IMR-90 (cell line): ENCODE measurements at regions of chr5 and their contacts with region 1.

Region 1: GRCh38 chr5:57779383-57780223 is 297.0 kb upstream of the ACTBL2 start:
- DNase-seq: peak; percentile 83
- ATAC-seq: peak; percentile 77
- H3K4me3 ChIP-seq: no peak overlapping the region
- H3K27ac ChIP-seq: peak overlapping the region; percentile 58; the same call in 1 of the 2 replicates
- H3K4me1 ChIP-seq: peaks cover 20% of the 10 kb centered on the region
- H3K27me3 ChIP-seq: no peaks in the 10 kb centered on the region
- CTCF ChIP-seq: peak; percentile 81
- POLR2A ChIP-seq: no peak; the same call in 1 of the 2 replicates
- RAD21 ChIP-seq: peak; percentile 92

Region 2: GRCh38 chr5:57383093-57383861 is 396.3 kb before region 1 on chr5:
- CTCF ChIA-PET with region 1: interaction called, 3 read pairs
- POLR2A ChIA-PET with region 1: no interaction called
- dilution Hi-C with region 1: no loop called
- in situ Hi-C with region 1: no loop called
- intact Hi-C with region 1: loop called (anchors 5 kb)
- DNase-seq: peak; percentile 99
- ATAC-seq: peak; percentile 93
- H3K4me3 ChIP-seq: no peak overlapping the region
- H3K27ac ChIP-seq: peak overlapping the region; percentile 94
- H3K4me1 ChIP-seq: peaks cover 8% of the 10 kb centered on the region
- H3K27me3 ChIP-seq: no peaks in the 10 kb centered on the region
- CTCF ChIP-seq: peak; percentile 59
- POLR2A ChIP-seq: no peak
- RAD21 ChIP-seq: peak; percentile 66

Region 3: DNA sequence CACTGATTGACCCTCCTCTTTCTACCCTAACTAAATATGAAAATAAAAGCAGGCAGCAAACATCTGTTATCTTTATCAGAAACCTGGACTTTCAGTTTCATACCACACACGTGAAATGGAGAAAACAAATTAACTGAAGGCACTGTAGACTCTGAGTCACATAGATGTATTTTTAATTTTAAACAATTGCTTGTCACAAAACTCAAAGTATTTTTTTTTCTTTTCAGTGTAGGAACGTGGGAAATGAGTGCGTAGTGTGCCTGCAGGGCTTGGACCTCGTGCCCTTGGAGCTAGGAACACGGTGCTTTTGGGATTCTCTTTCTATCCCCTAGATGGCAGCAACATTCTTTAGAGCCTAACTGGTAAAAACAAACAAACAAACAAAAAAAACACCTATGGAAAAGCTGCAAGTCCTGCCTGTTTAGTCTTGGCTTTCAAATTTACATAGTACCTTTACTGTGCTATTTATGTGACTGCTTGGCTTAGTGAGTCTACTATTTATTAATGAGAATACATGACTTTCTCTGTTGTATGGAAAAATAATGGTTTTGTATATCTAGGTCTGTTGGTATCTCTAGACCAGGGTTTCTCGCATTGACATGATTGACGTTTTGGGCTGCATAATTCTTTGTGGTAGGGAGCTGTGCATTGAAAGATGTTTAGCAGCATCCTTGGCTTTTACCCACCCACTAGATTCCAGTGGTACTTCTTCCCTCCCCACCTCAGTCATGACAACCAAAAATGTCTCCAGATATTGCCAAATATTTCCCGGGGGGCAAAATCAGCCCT is 280.1 kb before region 1 on chr5:
- CTCF ChIA-PET with region 1: interaction called, 34 read pairs
- POLR2A ChIA-PET with region 1: no interaction called
- dilution Hi-C with region 1: no loop called
- in situ Hi-C with region 1: no loop called
- intact Hi-C with region 1: loop called (anchors 1 kb)
- DNase-seq: peak; percentile 69
- ATAC-seq: 0 out of 2 replicates have a peak, but pooled peaks have one; percentile 9
- H3K4me3 ChIP-seq: no peak overlapping the region
- H3K27ac ChIP-seq: no peak overlapping the region; the same call in 1 of the 2 replicates
- H3K4me1 ChIP-seq: peaks cover 13% of the 10 kb centered on the region
- H3K27me3 ChIP-seq: no peaks in the 10 kb centered on the region
- CTCF ChIP-seq: peak; percentile 77
- POLR2A ChIP-seq: no peak
- RAD21 ChIP-seq: peak; percentile 84

Region 4: DNA sequence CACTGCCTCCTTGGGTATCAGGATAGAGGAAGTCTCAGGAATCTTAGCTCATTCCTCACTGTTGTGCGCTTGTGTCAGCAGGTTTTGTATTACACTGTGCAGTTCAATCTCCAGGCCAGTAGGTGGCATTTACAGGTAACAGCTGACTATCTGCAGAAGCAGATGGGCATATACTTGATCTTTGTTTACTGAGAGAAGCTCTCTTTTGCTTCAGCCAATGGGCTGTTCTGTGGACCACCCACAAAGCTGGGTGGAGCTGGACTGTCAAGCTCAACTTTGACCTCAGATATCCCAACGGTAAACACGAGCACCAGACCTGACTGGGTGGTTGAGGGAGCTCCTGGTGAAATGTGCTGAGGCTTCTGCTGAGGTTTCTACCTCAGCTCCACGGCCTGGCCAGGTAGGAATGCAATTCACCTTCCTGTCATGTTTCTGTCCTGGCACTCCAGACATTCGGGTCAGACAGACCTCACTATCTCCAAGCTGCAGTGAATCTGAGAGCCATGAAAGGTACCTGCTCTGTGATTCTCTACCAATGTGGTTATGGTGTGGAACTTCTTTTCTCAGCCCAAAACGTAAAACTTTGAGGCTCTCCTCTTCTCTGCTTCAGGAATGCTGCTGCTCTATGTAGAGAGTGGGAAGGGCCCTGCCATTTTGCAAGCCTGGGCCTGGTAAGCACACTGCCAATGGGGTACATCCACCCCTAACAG is 129.1 kb before region 1 on chr5:
- CTCF ChIA-PET with region 1: interaction called, 7 read pairs
- POLR2A ChIA-PET with region 1: no interaction called
- dilution Hi-C with region 1: no loop called
- in situ Hi-C with region 1: no loop called
- intact Hi-C with region 1: loop called (anchors 10 kb)
- DNase-seq: peak; percentile 53
- ATAC-seq: peak; percentile 86
- H3K4me3 ChIP-seq: no peak overlapping the region
- H3K27ac ChIP-seq: no peak overlapping the region
- H3K4me1 ChIP-seq: no peaks in the 10 kb centered on the region
- H3K27me3 ChIP-seq: no peaks in the 10 kb centered on the region
- CTCF ChIP-seq: peak; percentile 55
- POLR2A ChIP-seq: no peak
- RAD21 ChIP-seq: peak; percentile 66

Region 5: DNA sequence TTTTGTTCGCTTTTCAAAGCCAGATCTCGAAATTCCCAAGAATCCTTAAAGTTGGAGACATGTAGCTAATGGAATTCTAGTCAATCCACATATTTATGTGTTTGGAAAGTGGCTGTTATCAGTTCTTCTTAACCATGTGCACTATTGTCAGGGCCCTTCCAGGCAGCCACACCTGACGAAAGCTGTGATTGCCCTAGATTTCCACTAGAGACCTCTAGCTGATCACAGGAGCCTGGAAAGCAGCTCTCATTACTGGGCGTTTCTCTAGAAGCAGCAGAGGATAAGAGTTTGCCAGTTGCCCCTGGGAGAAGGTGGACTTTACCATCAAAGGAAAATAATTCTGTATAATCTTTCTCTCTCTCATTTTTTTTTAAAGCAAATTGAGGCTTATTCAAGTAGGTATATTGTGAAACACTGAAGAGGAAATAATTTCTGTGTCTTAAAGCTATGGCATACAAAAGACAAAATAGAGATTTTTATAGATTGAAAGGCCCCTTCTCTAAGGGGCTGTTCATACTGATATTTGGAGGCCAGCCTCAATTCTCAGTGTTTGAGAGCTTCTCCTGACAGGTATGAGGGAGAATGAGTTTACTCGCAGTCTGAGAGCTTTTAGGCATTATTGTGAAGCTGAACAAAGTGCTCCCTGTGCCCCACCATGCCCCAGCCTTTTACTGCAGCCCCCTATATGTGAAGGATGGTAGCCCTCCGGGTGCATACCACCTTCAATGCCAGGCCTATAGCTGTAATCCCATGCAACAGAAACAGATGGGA is 108.4 kb after region 1 on chr5:
- CTCF ChIA-PET with region 1: interaction called, 8 read pairs
- POLR2A ChIA-PET with region 1: no interaction called
- dilution Hi-C with region 1: no loop called
- in situ Hi-C with region 1: no loop called
- intact Hi-C with region 1: loop called (anchors 2 kb)
- DNase-seq: peak; percentile 69
- ATAC-seq: peak; percentile 83
- H3K4me3 ChIP-seq: no peak overlapping the region
- H3K27ac ChIP-seq: no peak overlapping the region
- H3K4me1 ChIP-seq: peaks cover 7% of the 10 kb centered on the region
- H3K27me3 ChIP-seq: no peaks in the 10 kb centered on the region
- CTCF ChIP-seq: peak; percentile 63
- POLR2A ChIP-seq: no peak
- RAD21 ChIP-seq: peak; percentile 80

Region 6: DNA sequence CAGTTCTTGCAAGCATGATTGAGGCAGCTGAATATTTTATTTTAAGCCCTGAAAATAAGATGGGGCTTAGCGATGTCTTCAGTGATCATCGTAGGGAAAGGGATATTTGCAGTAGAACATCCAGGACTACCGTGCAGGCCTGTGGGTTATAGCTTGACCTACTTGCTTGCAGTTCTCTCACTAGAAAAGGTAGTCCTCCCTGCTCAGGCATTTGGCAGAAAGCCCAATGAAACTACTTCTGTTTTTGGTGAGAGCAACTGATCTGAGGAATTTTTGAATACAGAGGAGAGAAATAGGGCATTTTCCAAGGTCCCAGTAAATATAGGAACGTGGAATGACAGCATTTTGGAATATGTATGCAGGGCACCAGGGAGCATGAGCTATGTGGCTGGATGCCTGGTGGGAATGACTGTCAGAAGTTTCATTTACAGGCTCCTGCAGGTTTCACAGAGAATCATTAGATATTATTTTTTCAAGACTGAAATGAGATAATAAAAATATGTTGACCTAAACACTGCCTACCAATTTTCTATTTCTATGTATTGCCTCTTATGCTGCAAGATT is 120.9 kb after region 1 on chr5:
- CTCF ChIA-PET with region 1: no interaction called
- POLR2A ChIA-PET with region 1: no interaction called
- dilution Hi-C with region 1: no loop called
- in situ Hi-C with region 1: no loop called
- intact Hi-C with region 1: no loop called
- DNase-seq: no peak
- ATAC-seq: no peak
- H3K4me3 ChIP-seq: no peak overlapping the region
- H3K27ac ChIP-seq: no peak overlapping the region
- H3K4me1 ChIP-seq: peaks cover 2% of the 10 kb centered on the region
- H3K27me3 ChIP-seq: no peaks in the 10 kb centered on the region
- CTCF ChIP-seq: no peak
- POLR2A ChIP-seq: no peak
- RAD21 ChIP-seq: no peak

Region 7: DNA sequence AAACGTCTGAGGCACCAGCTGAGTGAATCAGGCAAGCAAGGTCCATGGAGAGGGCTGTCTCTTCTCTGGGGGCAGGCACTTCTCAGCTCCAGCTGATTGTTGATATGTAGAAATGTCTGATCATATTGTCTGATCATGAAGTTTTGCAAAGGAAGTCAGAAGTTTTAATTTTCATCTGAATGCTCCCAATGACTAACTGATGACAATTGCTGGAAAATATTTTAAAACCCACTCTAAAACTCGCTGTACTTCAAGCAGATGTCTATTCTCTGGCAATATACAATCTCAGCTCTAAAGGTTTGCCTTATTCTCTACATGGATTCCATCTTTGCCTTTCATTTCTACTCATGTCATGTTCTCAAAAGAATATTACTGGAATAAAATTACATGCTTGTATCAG is 667.6 kb after region 1 on chr5:
- CTCF ChIA-PET with region 1: interaction called, 3 read pairs
- POLR2A ChIA-PET with region 1: interaction called, 3 read pairs
- dilution Hi-C with region 1: loop called (anchors 25 kb)
- in situ Hi-C with region 1: no loop called
- intact Hi-C with region 1: no loop called
- DNase-seq: peak; percentile 70
- ATAC-seq: no peak
- H3K4me3 ChIP-seq: no peak overlapping the region
- H3K27ac ChIP-seq: no peak overlapping the region
- H3K4me1 ChIP-seq: no peaks in the 10 kb centered on the region
- H3K27me3 ChIP-seq: no peaks in the 10 kb centered on the region
- CTCF ChIP-seq: no peak
- POLR2A ChIP-seq: no peak
- RAD21 ChIP-seq: no peak

Region 8: DNA sequence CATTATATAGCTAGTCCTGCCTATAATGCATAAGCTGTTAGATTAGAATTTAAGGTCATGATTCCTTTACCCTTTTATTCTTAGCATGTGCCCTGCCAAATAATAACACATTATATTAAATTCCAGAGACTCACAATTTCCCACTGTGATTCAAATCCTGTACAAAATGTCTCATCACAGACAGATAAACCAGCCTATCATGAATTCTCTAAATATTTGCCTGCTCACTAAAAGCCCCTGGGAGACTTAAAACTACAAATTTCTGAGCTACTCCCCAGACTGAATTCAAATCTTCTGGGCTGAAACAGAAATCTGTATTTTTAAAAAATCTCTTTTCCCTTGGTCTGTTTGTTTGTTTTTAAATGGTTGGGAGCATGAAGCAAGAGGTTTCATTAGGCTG is 744.4 kb after region 1 on chr5:
- CTCF ChIA-PET with region 1: no interaction called
- POLR2A ChIA-PET with region 1: no interaction called
- dilution Hi-C with region 1: no loop called
- in situ Hi-C with region 1: no loop called
- intact Hi-C with region 1: no loop called
- DNase-seq: no peak
- ATAC-seq: no peak
- H3K4me3 ChIP-seq: no peak overlapping the region
- H3K27ac ChIP-seq: no peak overlapping the region
- H3K4me1 ChIP-seq: no peaks in the 10 kb centered on the region
- H3K27me3 ChIP-seq: no peaks in the 10 kb centered on the region
- CTCF ChIP-seq: no peak
- POLR2A ChIP-seq: no peak
- RAD21 ChIP-seq: no peak